Activated B cell treated with CpG ODN at 0.5 μM for 24 hours (primary cell): ENCODE measurements at regions of chr19 and their contacts with region 1.

Region 1: DNA sequence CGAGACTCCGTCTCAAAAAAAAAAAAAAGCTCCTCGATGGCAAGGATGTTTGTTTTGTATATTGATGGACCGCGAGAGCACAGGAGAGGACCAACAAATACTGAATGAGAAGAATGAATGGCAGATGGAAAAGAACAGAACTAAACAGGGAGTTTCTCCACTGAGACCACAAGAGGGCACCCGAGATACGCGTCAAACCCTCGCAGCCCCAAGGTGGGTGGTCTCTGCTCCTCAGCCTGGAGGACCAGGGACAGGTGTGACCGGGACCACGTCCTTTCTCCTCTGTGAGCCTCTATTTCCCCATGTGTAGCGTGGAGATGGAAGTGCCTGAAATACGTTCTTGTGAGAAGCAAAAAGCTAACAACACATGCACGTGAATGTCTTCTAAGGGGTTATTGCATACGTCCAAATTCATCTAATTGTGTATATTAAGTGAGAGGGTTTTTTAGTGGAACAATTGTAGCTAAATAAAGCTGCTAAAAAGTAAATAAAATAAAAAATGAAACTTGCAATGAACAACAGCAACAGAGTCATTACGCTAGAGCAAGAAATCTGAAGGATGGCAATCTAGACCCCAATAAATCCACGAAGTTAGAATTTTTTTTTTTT is 8.3 kb upstream of the CDC42EP5 start:
- DNase-seq: no peak
- ATAC-seq: peak; percentile 62
- H3K4me3 Mint-ChIP-seq: no peak overlapping the region
- H3K27ac Mint-ChIP-seq: no peak overlapping the region
- H3K4me1 Mint-ChIP-seq: peaks cover 20% of the 10 kb centered on the region
- H3K27me3 Mint-ChIP-seq: peaks cover 33% of the 10 kb centered on the region
- CTCF ChIP-seq: no peak

Region 2: DNA sequence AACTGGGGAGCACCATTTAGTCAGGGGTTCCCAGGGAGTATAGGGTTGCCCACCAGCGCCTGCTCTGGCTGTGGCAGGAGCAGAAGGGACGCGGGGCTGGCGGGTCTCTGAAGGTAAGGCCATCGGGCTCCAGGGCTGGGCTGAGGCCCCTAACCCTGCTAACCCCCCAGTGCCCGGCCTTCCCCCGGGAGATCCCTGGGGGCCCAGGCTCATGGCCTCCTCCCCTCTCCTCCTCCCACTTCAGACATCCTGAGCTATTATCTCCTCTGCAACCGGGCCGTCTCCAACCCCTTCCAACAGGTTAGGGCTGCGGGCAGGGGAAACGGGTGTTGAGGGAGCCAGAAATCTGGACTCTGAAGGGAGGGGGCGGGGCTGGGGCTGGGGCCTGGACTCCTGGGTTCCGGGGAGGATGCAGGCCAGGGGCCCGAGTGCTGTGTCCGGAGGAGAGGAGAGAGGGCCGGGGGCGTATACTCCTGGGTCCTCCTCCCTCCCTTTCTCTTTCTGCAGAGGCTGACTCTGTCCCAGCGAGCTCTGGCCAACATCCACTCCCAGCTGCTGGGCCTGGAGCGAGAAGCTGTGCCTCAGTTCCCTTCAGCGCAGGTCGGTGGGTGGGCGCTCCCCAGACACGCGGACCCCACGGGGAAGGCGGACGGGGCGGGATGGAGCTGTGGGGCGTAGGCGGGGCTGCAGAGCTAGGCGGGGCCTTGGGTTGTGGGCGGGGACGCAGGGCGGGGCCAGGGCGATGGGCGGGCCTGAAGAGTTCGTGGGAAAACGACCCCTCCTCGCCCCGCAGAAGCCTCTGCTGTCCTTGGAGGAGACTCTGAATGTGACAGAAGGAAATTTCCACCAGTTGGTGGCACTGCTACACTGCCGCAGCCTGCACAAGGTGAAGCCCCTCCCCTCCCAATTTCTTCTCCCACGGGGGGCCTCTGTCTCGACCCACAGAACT is 50.8 kb before region 1 on chr19:
- CTCF ChIA-PET with region 1: interaction called, 6 read pairs
- POLR2A ChIA-PET with region 1: interaction called, 8 read pairs
- intact Hi-C with region 1: loop called (anchors 1 kb)
- DNase-seq: peak; percentile 34
- ATAC-seq: peak; percentile 93
- H3K4me3 Mint-ChIP-seq: peak overlapping the region; percentile 58
- H3K27ac Mint-ChIP-seq: no peak overlapping the region
- H3K4me1 Mint-ChIP-seq: peaks cover 20% of the 10 kb centered on the region
- H3K27me3 Mint-ChIP-seq: peaks cover 23% of the 10 kb centered on the region
- CTCF ChIP-seq: no peak

Region 3: GRCh38 chr19:54551950-54552912 is 70.8 kb after region 1 on chr19:
- CTCF ChIA-PET with region 1: no interaction called
- POLR2A ChIA-PET with region 1: interaction called, 10 read pairs
- intact Hi-C with region 1: no loop called
- DNase-seq: no peak
- ATAC-seq: no peak
- H3K4me3 Mint-ChIP-seq: no peak overlapping the region
- H3K27ac Mint-ChIP-seq: no peak overlapping the region
- H3K4me1 Mint-ChIP-seq: peaks cover 15% of the 10 kb centered on the region
- H3K27me3 Mint-ChIP-seq: peaks cover 11% of the 10 kb centered on the region
- CTCF ChIP-seq: no peak

Region 4: GRCh38 chr19:54653181-54653809 is 171.9 kb after region 1 on chr19:
- CTCF ChIA-PET with region 1: interaction called, 12 read pairs
- POLR2A ChIA-PET with region 1: no interaction called
- intact Hi-C with region 1: no loop called
- DNase-seq: no peak
- ATAC-seq: peak; percentile 42
- H3K4me3 Mint-ChIP-seq: no peak overlapping the region
- H3K27ac Mint-ChIP-seq: no peak overlapping the region
- H3K4me1 Mint-ChIP-seq: peaks cover 12% of the 10 kb centered on the region
- H3K27me3 Mint-ChIP-seq: no peaks in the 10 kb centered on the region
- CTCF ChIP-seq: peak; percentile 88

Region 5: DNA sequence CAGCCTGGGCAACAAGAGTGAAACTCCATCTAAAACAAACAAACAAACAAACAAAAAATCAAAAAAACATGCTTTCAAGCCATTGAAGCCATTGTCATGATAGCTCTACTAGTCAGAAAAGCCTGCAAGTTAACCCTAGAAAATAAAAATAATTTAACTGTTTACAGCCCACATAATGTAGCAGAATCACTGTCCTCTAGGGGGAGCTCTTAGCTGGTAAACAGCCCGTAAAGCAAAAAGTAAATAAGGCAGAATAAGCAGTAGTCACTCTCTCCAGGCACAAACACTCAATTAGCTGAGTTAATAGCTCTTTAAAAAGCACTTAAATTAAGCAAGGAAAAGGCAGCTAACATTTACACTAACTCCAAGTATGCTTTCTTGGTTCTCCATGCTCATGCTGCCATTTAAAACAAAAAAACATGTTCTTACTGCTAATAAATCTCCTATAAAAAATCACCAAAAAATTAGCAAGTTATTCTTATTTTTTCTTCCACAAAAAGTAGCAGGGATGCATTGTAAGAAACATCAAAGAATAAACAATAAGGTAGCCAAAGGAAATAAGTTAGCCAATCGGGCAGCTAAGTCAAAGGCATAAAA is 192.7 kb after region 1 on chr19:
- CTCF ChIA-PET with region 1: interaction called, 48 read pairs
- POLR2A ChIA-PET with region 1: no interaction called
- intact Hi-C with region 1: loop called (anchors 1 kb)
- DNase-seq: no peak
- ATAC-seq: no peak
- H3K4me3 Mint-ChIP-seq: no peak overlapping the region
- H3K27ac Mint-ChIP-seq: no peak overlapping the region
- H3K4me1 Mint-ChIP-seq: no peaks in the 10 kb centered on the region
- H3K27me3 Mint-ChIP-seq: peaks cover 15% of the 10 kb centered on the region
- CTCF ChIP-seq: no peak

Region 6: DNA sequence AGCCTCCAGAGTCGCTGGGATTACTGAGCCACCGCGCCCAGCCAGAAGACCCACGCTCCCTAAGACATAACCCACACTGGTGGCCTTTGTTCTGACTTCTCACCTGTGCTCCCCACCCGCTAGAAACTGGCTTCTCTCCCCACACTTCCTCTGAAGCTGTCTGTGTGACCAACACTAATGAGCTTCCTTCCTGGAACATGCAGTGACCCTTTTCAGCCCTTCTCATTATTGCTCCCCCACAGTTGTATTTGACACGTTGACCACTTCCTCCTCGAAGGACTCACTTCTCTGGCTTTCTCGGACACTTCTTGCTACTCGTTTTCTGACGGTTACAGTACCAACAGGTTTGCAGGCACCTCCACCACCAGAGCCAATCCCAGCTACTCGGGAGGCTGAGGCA is 435.4 kb after region 1 on chr19:
- CTCF ChIA-PET with region 1: no interaction called
- POLR2A ChIA-PET with region 1: no interaction called
- intact Hi-C with region 1: loop called (anchors 1 kb)
- DNase-seq: no peak
- ATAC-seq: no peak
- H3K4me3 Mint-ChIP-seq: no peak overlapping the region
- H3K27ac Mint-ChIP-seq: no peak overlapping the region
- H3K4me1 Mint-ChIP-seq: peaks cover 3% of the 10 kb centered on the region
- H3K27me3 Mint-ChIP-seq: peaks cover 14% of the 10 kb centered on the region
- CTCF ChIP-seq: no peak